Esophagus muscularis mucosa (tissue), 4 donors: ENCODE measurements at regions of chr5 and their contacts with region 1.

Region 1: GRCh38 chr5:90932052-90932699 is 373.6 kb downstream of the ADGRV1 start:
- DNase-seq: no peak
- H3K4me3 ChIP-seq: no peak overlapping the region
- H3K27ac ChIP-seq: no peak overlapping the region
- H3K4me1 ChIP-seq: peaks cover 0 to 22% (median 11%) of the 10 kb centered on the region in 4 donors
- H3K27me3 ChIP-seq: no peaks in the 10 kb centered on the region
- CTCF ChIP-seq: peak; percentile 77 to 82 (median 80)
- EP300 ChIP-seq: no peak
- POLR2A ChIP-seq: no peak

Region 2: GRCh38 chr5:90740244-90740799 is 191.9 kb before region 1 on chr5:
- intact Hi-C with region 1: no loop called
- DNase-seq: no peak
- H3K4me3 ChIP-seq: no peak overlapping the region
- H3K27ac ChIP-seq: no peak overlapping the region
- H3K4me1 ChIP-seq: no peaks in the 10 kb centered on the region
- H3K27me3 ChIP-seq: no peaks in the 10 kb centered on the region
- CTCF ChIP-seq: no peak
- EP300 ChIP-seq: no peak
- POLR2A ChIP-seq: no peak

Region 3: DNA sequence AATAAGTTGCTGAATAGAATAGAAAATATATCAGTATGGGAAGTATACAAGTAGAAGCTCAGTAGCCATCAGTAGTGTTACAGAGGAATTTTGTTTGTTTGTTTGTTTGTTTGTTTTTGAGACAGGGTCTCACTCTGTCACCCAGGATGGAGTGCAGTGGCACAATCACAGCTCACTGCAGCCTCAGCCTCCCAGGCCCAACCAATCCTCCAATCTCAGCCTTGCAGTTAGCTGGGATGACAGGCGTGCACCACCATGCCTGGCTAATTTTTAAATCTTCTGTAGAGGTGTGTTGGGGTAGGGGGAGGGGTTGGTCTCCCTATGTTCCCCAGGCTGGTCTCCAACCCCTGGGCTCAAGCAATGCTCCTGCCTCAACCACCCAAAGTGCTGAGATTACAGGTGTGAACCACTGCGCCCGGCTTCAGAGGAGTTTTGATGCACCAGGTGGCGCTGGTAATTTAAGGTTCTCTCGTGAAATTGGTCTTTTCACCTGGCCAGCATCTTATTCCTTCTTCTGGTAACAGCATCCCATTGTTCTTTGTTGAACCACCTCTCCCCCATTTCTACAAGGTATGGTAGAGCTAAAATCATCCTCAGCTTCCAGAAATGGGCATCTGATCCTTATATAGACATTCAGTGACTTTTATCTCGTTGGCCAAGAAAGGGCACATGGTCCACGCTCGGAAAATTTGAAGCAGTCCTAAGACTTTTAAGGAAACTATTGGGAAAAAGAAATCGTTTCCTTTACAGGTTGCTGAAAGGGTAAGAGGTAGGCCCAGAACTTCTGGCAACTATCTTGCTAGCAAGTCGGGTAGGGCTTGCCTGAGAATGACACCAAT is 293.9 kb after region 1 on chr5:
- intact Hi-C with region 1: loop called (anchors 10 kb)
- DNase-seq: no peak
- H3K4me3 ChIP-seq: no peak overlapping the region
- H3K27ac ChIP-seq: no peak overlapping the region
- H3K4me1 ChIP-seq: no peaks in the 10 kb centered on the region
- H3K27me3 ChIP-seq: no peaks in the 10 kb centered on the region
- CTCF ChIP-seq: peak in 1 of 3 experiments; percentile 38
- EP300 ChIP-seq: no peak
- POLR2A ChIP-seq: no peak

Region 4: GRCh38 chr5:91311697-91312501 is 379.7 kb after region 1 on chr5:
- intact Hi-C with region 1: loop called (anchors 10 kb)
- DNase-seq: peak; percentile 95
- H3K4me3 ChIP-seq: no peak overlapping the region
- H3K27ac ChIP-seq: peak overlapping the region; percentile 76 to 81 (median 79)
- H3K4me1 ChIP-seq: peaks cover 39 to 47% (median 41%) of the 10 kb centered on the region in 4 donors
- H3K27me3 ChIP-seq: no peaks in the 10 kb centered on the region
- CTCF ChIP-seq: peak in 1 of 3 experiments; percentile 12
- EP300 ChIP-seq: no peak
- POLR2A ChIP-seq: no peak